CD4-positive, alpha-beta memory T cell (primary cell): ENCODE measurements at regions of chr10 and their contacts with region 1.

Region 1: GRCh38 chr10:14954001-14954770 is at the start of gene DCLRE1C:
- DNase-seq: peak; percentile 85 to 90 (median 89)
- H3K4me3 ChIP-seq: peak within 1 kb of the TSS; percentile 92 to 99
- H3K4me3 Mint-ChIP-seq: peak within 1 kb of the TSS; percentile 87 to 96 (median 92)
- H3K27ac ChIP-seq: peak within 1 kb of the TSS; percentile 73
- H3K27ac Mint-ChIP-seq: peak within 1 kb of the TSS; percentile 89 to 97 (median 96)
- H3K4me1 ChIP-seq: peaks cover 52% of the 10 kb centered on the region
- H3K4me1 Mint-ChIP-seq: peaks cover 37 to 73% (median 53%) of the 10 kb centered on the region in 4 donors
- H3K27me3 ChIP-seq: no peaks in the 10 kb centered on the region
- H3K27me3 Mint-ChIP-seq: no peaks in the 10 kb centered on the region
- total RNA-seq, gene DCLRE1C: 31.2 to 34.9 TPM

Region 2: GRCh38 chr10:14507176-14507575 is 447.0 kb before region 1 on chr10:
- CTCF ChIA-PET with region 1: no interaction called
- POLR2A ChIA-PET with region 1: no interaction called
- intact Hi-C with region 1: loop called (anchors 5 kb)
- DNase-seq: peak; percentile 80 to 89 (median 85)
- H3K4me3 ChIP-seq: no peak overlapping the region
- H3K4me3 Mint-ChIP-seq: peak overlapping the region; percentile 26 to 75 (median 67)
- H3K27ac ChIP-seq: peak overlapping the region; percentile 56
- H3K27ac Mint-ChIP-seq: peak overlapping the region; percentile 89 to 99 (median 96)
- H3K4me1 ChIP-seq: peaks cover 39% of the 10 kb centered on the region
- H3K4me1 Mint-ChIP-seq: peaks cover 37 to 40% (median 38%) of the 10 kb centered on the region in 4 donors
- H3K27me3 ChIP-seq: no peaks in the 10 kb centered on the region
- H3K27me3 Mint-ChIP-seq: no peaks in the 10 kb centered on the region

Region 3: DNA sequence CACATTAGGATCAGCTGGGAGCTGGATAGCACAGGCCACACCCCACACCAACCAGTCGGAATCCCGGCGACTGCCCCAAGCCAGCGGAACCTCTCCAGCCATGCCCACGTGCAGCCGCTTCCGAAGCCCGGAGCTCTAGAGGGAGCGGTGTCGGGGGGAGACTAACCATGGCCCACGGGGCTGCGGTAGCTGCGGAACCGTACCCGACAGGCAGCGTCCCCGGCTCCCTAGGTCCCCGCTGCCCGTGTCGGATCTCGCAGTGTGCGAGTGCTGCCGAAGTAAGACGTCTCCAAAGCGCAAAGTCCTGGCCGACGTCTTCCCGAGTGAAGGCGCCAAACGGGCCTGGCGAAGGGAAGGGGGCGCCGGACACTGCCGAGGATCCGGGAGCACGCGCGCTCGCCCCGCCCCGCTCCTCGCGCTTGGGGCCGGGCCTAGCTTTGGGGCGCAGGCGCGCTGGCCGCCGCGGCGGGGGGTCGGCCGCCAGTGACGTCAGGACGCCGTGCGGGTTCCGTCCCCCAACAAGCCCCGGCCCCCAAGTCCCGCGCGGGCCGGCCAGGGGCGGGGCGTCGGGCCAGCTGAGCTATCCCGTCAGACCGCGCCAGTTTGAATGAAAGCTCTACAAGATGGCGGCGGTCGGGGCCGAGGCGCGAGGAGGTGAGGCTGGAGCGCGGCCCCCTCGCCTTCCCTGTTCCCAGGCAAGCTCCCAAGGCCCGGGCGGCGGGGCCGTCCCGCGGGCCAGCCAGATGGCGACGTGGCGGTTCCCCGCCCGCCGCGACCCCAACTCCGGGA is 75.7 kb before region 1 on chr10 and contains the start of gene SUV39H2:
- CTCF ChIA-PET with region 1: interaction called, 4 read pairs
- POLR2A ChIA-PET with region 1: interaction called, 20 read pairs
- intact Hi-C with region 1: loop called (anchors 2 kb)
- DNase-seq: peak; percentile 87 to 91 (median 90)
- H3K4me3 ChIP-seq: peak within 1 kb of the TSS; percentile 44 to 88
- H3K4me3 Mint-ChIP-seq: peak within 1 kb of the TSS; percentile 93 to 96 (median 94)
- H3K27ac ChIP-seq: peak within 1 kb of the TSS; percentile 84
- H3K27ac Mint-ChIP-seq: peak within 1 kb of the TSS; percentile 87 to 95 (median 94)
- H3K4me1 ChIP-seq: peaks cover 17% of the 10 kb centered on the region
- H3K4me1 Mint-ChIP-seq: peaks cover 13 to 48% (median 22%) of the 10 kb centered on the region in 4 donors
- H3K27me3 ChIP-seq: no peaks in the 10 kb centered on the region
- H3K27me3 Mint-ChIP-seq: no peaks in the 10 kb centered on the region
- total RNA-seq, gene SUV39H2: 5.0 to 5.7 TPM

Region 4: DNA sequence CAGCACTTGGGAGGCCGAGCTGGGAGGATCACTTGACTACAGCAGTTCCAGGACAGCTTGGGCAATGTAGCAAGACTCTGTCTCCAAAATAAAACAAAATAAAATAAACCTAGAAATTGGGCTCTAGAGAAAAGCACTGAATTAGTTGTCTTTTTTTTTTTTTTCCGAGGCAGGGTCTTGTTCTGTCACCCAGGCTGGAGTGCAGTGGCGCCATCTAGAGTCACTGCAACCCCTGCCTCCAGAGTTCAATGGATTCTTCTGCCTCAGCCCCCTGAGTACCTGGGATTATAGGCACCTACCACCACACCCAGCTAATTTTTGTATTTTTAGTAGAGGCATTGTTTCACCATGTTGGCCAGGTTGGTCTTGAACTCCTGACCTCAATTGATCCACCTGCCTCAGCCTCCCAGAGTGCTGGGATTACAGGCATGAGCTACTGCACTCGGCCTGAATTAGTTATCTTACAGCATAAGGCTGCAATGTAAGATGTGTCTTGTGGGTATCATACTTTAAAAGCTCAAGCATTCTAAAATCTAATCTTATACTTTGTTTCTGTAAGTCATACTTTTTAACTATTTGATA is 17.8 kb after region 1 on chr10:
- CTCF ChIA-PET with region 1: interaction called, 22 read pairs
- POLR2A ChIA-PET with region 1: interaction called, 3 read pairs
- intact Hi-C with region 1: no loop called
- DNase-seq: peak in 4 of 5 donors; percentile 38 to 48 (median 44)
- H3K4me3 ChIP-seq: no peak overlapping the region
- H3K4me3 Mint-ChIP-seq: no peak overlapping the region
- H3K27ac ChIP-seq: no peak overlapping the region
- H3K27ac Mint-ChIP-seq: no peak overlapping the region
- H3K4me1 ChIP-seq: peaks cover 3% of the 10 kb centered on the region
- H3K4me1 Mint-ChIP-seq: peaks cover 0 to 6% (median 3%) of the 10 kb centered on the region in 4 donors
- H3K27me3 ChIP-seq: no peaks in the 10 kb centered on the region
- H3K27me3 Mint-ChIP-seq: peaks cover 13 to 21% of the 10 kb centered on the region in 2 donors

Region 5: GRCh38 chr10:15027741-15028140 is 73.6 kb after region 1 on chr10:
- CTCF ChIA-PET with region 1: no interaction called
- POLR2A ChIA-PET with region 1: no interaction called
- intact Hi-C with region 1: no loop called
- DNase-seq: no peak
- H3K4me3 ChIP-seq: no peak overlapping the region
- H3K4me3 Mint-ChIP-seq: no peak overlapping the region
- H3K27ac ChIP-seq: no peak overlapping the region
- H3K27ac Mint-ChIP-seq: peak overlapping the region in 1 of 7 donors; percentile 70
- H3K4me1 ChIP-seq: no peaks in the 10 kb centered on the region
- H3K4me1 Mint-ChIP-seq: peaks cover 0 to 9% (median 6%) of the 10 kb centered on the region in 4 donors
- H3K27me3 ChIP-seq: no peaks in the 10 kb centered on the region
- H3K27me3 Mint-ChIP-seq: peaks cover 2 to 3% of the 10 kb centered on the region in 2 donors

Region 6: DNA sequence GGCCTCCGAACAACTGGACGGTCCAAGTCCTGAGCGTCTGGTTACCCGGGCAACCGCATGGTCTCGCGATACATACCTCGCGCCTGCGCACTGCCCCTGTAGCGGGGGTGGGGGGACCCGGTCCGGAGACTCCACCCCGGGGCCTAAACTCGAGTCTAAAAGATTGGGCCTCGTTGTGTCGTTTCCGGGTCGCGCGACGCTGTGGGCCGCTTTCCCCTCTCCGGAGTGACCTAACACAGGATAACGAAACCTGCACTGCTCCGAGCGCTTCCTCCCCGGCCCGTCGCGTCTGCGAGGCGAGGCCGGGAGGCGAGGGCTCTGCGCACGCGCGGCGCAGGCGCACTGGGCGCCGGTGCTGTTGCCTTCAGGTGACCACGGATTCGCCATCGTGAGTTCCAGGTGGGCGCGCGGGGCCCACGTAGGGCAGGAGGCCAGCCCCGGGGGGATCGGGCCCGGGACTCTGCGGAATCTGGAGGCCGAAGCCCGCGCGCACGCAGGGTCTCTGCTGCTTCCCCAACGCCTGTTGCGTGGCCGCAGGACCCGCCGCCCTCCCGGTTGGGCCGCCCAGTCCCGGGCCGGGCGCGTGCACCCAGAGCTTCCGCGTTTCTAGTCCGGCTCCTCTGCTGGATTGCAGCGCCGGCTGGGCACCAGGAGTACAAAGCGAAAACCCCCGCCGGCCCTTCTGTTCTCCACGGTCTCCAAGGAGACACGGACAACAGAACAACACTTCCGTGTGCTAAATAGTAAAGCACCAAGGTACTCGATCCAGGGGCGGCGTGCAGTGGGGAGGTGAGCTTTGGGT is 143.0 kb after region 1 on chr10 and contains the start of gene RPP38:
- CTCF ChIA-PET with region 1: no interaction called
- POLR2A ChIA-PET with region 1: interaction called, 6 read pairs
- intact Hi-C with region 1: loop called (anchors 5 kb)
- DNase-seq: peak; percentile 94 to 97 (median 95)
- H3K4me3 ChIP-seq: peak within 1 kb of the TSS; percentile 86 to 97
- H3K4me3 Mint-ChIP-seq: peak within 1 kb of the TSS; percentile 91 to 99 (median 96)
- H3K27ac ChIP-seq: peak within 1 kb of the TSS; percentile 95
- H3K27ac Mint-ChIP-seq: peak within 1 kb of the TSS; percentile 94 to 99 (median 98)
- H3K4me1 ChIP-seq: peaks cover 38% of the 10 kb centered on the region
- H3K4me1 Mint-ChIP-seq: peaks cover 16 to 44% (median 31%) of the 10 kb centered on the region in 4 donors
- H3K27me3 ChIP-seq: no peaks in the 10 kb centered on the region
- H3K27me3 Mint-ChIP-seq: no peaks in the 10 kb centered on the region
- total RNA-seq, gene RPP38: 19.8 to 21.8 TPM